Cardiac septum (tissue), 1 donor: ENCODE measurements at regions of chr6 and their contacts with region 1.

Region 1: GRCh38 chr6:37127961-37128862 is 41.7 kb upstream of the PIM1 start:
- DNase-seq: no peak

Region 2: DNA sequence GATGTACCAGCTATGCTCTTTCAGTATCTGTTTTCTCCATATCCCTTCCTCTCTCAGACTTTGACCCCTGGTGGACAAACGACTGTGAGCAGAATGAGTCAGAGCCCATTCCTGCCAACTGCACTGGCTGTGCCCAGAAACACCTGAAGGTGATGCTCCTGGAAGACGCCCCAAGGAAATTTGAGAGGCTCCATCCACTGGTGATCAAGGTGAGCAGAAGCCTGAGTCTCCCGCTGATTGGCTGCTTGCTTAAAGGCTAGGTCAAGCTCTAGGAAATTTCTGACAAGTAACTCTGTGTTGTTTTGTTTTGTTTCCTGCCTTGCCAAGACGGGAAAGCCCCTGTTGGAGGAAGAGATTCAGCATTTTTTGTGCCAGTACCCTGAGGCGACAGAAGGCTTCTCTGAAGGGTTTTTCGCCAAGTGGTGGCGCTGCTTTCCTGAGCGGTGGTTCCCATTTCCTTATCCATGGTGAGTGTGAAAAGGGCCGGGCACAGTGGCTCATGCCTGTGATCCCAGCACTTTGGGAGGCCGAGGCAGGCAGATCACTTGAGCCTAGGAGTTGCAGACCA is 213.9 kb before region 1 on chr6:
- intact Hi-C with region 1: no loop called
- DNase-seq: no peak

Region 3: DNA sequence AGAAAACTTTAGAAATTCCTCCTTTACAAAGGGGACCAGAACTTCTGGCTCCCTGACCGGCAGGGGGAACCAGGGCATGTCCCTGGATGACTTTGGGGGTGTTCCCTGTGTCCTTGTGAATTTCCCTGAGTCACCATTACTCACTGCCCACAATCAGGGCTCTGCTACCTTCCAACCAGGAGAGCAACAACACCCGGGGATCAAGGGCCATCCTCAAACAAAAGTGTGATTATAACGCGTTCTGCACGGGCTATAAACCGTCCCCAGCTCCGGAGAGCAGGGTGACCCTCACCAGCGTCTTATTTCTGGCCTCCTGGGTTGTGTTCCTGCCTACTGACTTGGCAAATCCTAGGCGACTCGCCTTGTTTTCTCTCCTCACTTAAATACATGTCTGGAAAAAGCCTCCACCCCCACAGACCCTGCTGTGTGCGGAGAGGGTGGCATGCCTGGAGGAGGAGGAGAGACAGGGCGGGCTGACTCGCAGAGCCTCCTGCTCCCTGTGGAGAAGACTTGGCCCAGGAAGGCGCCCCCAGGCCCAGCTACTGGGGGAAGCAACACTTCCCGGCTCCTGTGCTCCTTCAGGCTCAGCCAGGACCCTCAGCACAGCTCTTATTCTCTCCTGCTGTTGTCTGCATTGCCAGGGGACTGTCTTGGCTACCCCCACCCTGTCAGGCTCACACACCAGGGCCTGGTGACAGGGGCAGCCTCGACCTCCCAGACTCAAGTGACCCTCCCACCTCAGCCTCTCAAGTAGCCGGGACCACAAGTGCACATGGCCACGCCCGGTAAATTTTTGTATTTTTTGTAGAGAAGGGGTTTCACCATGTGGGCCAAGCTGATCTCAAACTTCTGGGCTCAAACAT is 68.6 kb before region 1 on chr6:
- intact Hi-C with region 1: loop called (anchors 5 kb)
- DNase-seq: no peak

Region 4: DNA sequence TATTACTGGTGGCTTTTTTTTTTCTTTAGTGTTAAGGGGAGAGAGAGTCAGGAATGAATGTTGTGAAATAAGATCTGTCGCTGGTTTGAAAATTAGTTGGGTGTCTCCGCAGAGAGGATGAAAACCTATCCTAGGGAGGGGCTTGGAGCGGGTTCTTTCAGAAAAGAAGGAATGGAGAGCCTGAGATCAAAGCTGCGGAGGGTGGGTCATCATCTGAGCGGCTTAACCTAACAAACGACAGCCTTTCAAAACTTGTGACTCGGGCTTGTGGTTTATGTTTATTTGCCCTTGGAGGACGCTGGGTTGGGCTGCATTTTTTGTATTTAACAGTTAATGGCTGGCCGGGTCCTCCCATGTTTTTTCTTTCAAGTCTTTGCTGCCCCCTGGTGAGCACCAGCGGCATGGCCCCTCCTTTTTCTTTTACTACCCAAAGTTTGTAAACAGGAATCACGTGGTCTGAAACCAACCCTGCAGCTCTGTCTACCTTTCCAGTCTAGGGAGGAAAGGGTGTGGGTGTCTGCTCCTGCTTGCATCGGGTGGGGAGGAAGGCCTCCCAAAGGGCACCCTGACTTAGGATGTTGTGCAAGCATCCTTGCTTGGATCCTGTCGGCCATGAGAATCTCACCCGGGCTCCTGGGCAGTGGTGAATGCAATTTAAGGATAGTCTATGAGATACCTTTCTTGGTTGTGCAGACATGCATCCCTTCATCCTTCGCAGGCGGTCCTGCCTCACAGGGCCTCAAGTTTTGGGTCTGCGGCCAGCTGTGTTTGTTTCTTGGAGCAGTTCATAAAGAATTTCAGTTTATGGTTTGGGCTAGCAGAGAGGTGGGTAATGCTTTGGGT is 44.0 kb after region 1 on chr6:
- intact Hi-C with region 1: no loop called
- DNase-seq: peak; percentile 92